ENCODE measurements at regions of chr9 and their contacts with region 1.

Region 1: GRCh38 chr9:32579706-32580331 is 6.9 kb upstream of the NDUFB6 start:
- DNase-seq: peak; percentile 2
- H3K4me3 ChIP-seq: no peak overlapping the region
- H3K27ac ChIP-seq: no peak overlapping the region
- H3K27me3 ChIP-seq: no peaks in the 10 kb centered on the region
- CTCF ChIP-seq: peak; percentile 96

Region 2: DNA sequence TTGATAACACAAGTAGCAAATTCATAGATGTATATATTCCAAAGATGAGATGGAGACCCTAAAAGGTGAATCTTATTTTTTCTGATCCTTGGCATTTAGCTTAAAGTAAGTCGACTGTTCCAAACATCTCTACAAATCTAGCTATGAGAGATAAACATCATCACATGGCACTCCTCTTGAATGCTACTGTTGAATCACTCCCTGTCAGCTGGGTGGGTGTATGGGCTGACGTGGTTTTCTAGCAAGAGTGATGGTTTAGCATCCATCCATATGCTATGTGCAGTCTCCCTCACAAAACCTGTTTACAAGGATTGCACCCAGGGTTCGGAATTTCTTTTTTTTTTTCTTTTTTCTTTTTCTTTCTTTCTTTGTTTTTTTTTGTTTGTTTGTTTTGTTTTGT is 181.6 kb before region 1 on chr9:
- CTCF ChIA-PET with region 1: interaction called, 11 read pairs
- POLR2A ChIA-PET with region 1: no interaction called
- DNase-seq: no peak
- H3K4me3 ChIP-seq: no peak overlapping the region
- H3K27ac ChIP-seq: no peak overlapping the region
- H3K27me3 ChIP-seq: no peaks in the 10 kb centered on the region
- CTCF ChIP-seq: no peak

Region 3: GRCh38 chr9:32526041-32526706 is 53.6 kb before region 1 on chr9 and contains the start of gene RIGI:
- CTCF ChIA-PET with region 1: interaction called, 10 read pairs
- POLR2A ChIA-PET with region 1: no interaction called
- DNase-seq: peak; percentile 82
- H3K4me3 ChIP-seq: peak within 1 kb of the TSS; percentile 84
- H3K27ac ChIP-seq: peak within 1 kb of the TSS; percentile 73
- H3K27me3 ChIP-seq: no peaks in the 10 kb centered on the region
- CTCF ChIP-seq: peak; percentile 32
- polyA plus RNA-seq, gene RIGI: 8.4 and 11.1 TPM in 2 replicates

Region 4: DNA sequence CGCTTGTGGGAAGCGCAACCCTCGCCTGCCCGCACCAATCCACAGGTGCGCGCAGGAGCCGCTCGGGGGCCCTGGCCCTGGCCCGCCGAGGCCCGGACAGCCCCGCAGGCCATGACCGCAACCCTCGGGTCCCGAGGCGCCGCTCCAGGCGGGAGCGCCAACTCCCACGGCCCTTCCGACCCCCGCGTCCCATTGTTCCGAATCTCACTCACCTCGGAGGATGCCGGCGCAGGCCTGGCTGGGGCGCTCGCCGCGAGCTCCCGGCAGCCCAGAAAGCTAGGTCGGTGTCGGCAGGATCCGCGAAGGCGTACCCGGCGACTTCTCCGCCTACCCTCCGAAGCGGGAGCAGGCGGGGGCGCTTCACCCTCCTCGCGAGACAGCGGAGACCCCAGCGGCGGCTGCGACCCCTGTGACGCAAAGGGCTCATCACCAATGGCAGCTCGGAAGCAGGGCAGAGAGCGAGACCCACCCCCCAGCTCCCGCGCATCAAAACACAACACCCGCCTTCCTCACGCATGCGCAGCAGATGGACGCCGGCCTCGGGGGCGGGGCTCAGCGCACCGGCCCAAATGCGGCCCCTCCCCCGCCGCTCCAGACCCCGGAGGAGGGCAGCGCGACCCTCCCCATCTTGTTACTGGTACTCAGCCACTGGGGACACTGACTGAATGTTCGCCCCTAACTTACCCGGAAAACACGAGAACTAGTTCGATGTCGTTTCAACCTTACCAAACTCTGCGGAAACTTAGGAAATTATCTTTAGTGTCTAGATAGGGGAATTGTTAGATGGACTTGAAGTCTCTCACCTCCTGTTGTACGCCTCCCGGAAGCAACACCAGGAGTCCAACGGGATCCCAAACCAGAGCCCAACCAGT is 29.0 kb before region 1 on chr9:
- CTCF ChIA-PET with region 1: interaction called, 24 read pairs
- POLR2A ChIA-PET with region 1: no interaction called
- DNase-seq: peak; percentile 86
- H3K4me3 ChIP-seq: peak overlapping the region; percentile 82
- H3K27ac ChIP-seq: peak overlapping the region; percentile 85
- H3K27me3 ChIP-seq: no peaks in the 10 kb centered on the region
- CTCF ChIP-seq: 0 out of 2 replicates have a peak, but pooled peaks have one; percentile 10

Region 5: DNA sequence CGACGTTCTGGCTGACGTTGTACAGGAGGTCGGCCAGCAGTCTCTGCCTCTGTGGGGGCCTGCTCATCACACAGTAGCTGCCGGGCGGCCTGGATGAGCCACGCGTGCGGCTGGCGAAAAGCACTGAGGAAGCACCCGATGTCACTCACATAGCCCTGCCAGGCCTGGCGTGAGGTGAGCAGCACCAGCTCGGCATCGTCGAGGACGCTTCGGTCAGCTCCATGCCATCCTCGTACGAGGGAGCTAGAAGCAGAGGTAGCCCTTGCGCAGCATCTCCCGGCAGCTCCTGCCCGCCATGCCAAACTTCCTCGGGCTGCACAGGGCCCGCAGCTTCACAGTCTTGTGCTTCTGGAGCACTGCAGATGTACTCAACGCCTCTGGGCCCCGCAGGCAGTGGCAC is 13.0 kb before region 1 on chr9:
- CTCF ChIA-PET with region 1: interaction called, 23 read pairs
- POLR2A ChIA-PET with region 1: no interaction called
- DNase-seq: no peak
- H3K4me3 ChIP-seq: no peak overlapping the region
- H3K27ac ChIP-seq: no peak overlapping the region
- H3K27me3 ChIP-seq: no peaks in the 10 kb centered on the region
- CTCF ChIP-seq: no peak

Region 6: GRCh38 chr9:32801530-32801929 is 221.7 kb after region 1 on chr9:
- CTCF ChIA-PET with region 1: no interaction called
- POLR2A ChIA-PET with region 1: no interaction called
- DNase-seq: no peak
- H3K4me3 ChIP-seq: no peak overlapping the region
- H3K27ac ChIP-seq: no peak overlapping the region
- H3K27me3 ChIP-seq: no peaks in the 10 kb centered on the region
- CTCF ChIP-seq: no peak

Region 7: DNA sequence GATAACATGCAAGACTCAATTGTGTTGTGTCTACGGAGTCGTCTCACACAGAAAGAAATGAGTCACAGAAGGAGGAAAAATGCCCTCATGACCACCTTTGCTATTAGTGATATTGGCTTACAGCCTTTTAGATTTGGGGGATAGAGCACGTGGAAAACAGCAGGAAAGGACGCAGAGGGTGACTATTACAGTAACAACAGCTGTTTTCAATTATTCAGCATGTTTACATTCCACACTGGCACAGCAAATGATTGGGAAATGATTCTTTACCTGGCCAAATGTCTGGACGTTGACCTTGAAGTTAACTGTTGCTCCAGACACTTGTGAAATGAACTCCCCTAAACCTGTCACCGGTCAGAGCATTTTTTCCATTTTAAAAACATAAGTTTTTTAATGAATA is 374.8 kb after region 1 on chr9:
- CTCF ChIA-PET with region 1: interaction called, 14 read pairs
- POLR2A ChIA-PET with region 1: no interaction called
- DNase-seq: no peak
- H3K4me3 ChIP-seq: no peak overlapping the region
- H3K27ac ChIP-seq: no peak overlapping the region
- H3K27me3 ChIP-seq: no peaks in the 10 kb centered on the region
- CTCF ChIP-seq: no peak